ENCODE measurements at regions of chr11 and their contacts with region 1.

Region 1: GRCh38 chr11:58268137-58268536 is at the start of gene OR10W1:
- DNase-seq: no peak
- ATAC-seq: no peak
- H3K4me3 Mint-ChIP-seq: no peak within 1 kb of the TSS
- H3K27ac Mint-ChIP-seq: no peak within 1 kb of the TSS
- H3K4me1 Mint-ChIP-seq: no peaks in the 10 kb centered on the region
- H3K27me3 Mint-ChIP-seq: peaks cover 20% of the 10 kb centered on the region
- total RNA-seq, gene OR10W1: not detected

Region 2: DNA sequence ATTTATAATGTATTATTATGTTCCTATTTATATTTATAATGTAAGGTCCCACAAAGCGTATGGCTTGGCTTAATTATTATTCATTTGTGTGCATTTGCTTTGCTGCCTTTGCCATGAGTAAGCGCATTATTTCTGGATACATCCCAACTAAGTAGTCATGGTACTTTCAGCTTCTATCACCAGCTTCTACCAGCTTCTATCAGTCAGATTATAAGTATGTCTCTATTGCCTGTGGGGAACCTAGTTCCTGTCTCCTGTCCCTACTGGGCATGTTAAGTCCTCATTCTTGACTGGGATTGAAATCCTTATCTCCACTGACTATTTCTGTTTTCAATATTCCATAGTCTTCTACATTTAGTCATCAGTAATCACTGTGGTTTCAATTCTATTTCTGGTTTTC is 33.4 kb after region 1 on chr11:
- CTCF ChIA-PET with region 1: no interaction called
- POLR2A ChIA-PET with region 1: no interaction called
- intact Hi-C with region 1: loop called in 1 of 2 experiments (anchors 1 kb)
- DNase-seq: no peak
- ATAC-seq: no peak
- H3K4me3 Mint-ChIP-seq: no peak overlapping the region
- H3K27ac Mint-ChIP-seq: no peak overlapping the region
- H3K4me1 Mint-ChIP-seq: no peaks in the 10 kb centered on the region
- H3K27me3 Mint-ChIP-seq: peaks cover 9% of the 10 kb centered on the region

Region 3: DNA sequence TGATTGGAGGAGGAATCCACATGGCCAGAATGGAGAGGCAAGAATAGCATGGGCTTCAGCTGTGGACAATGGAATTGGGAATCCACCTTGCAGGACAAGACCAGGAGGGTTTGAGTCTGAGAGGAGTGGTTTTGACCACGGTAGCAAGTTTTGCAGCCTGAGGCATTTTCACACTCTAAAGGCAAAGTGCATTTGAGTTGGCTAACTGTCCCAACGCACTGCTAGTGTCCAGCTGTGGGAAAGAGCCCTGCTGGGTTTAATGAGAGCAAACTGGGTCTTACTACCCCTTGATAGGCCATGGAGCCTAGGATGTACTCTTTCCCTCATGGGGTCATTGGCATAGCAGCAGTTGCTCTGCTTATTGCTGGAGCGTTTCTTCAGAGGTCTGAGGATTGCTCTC is 159.9 kb after region 1 on chr11 and contains the start of gene OR5B2:
- CTCF ChIA-PET with region 1: no interaction called
- POLR2A ChIA-PET with region 1: no interaction called
- intact Hi-C with region 1: no loop called
- DNase-seq: no peak
- ATAC-seq: no peak
- H3K4me3 Mint-ChIP-seq: no peak within 1 kb of the TSS
- H3K27ac Mint-ChIP-seq: no peak within 1 kb of the TSS
- H3K4me1 Mint-ChIP-seq: no peaks in the 10 kb centered on the region
- H3K27me3 Mint-ChIP-seq: peaks cover 13% of the 10 kb centered on the region
- total RNA-seq, gene OR5B2: not detected

Measured in activated CD4-positive, alpha-beta T cell treated with anti-CD3 and anti-CD28 coated beads for 36 hours (primary cell).